Activated CD4-positive, alpha-beta memory T cell treated with anti-CD3 and anti-CD28 coated beads for 36 hours (primary cell): ENCODE measurements at regions of chr1 and their contacts with region 1.

Region 1: GRCh38 chr1:183655562-183656075 is 2.5 kb upstream of the APOBEC4 start:
- DNase-seq: peak; percentile 81
- H3K4me3 Mint-ChIP-seq: no peak overlapping the region
- H3K27ac Mint-ChIP-seq: no peak overlapping the region
- H3K4me1 Mint-ChIP-seq: peaks cover 33% of the 10 kb centered on the region
- H3K27me3 Mint-ChIP-seq: no peaks in the 10 kb centered on the region

Region 2: GRCh38 chr1:183635606-183636333 is 19.8 kb before region 1 on chr1 and contains the start of gene ARPC5:
- CTCF ChIA-PET with region 1: interaction called, 57 read pairs
- POLR2A ChIA-PET with region 1: interaction called, 3 read pairs
- intact Hi-C with region 1: loop called (anchors 1 kb)
- DNase-seq: peak; percentile 98
- H3K4me3 Mint-ChIP-seq: peak within 1 kb of the TSS; percentile 95
- H3K27ac Mint-ChIP-seq: peak within 1 kb of the TSS; percentile 99
- H3K4me1 Mint-ChIP-seq: peaks cover 33% of the 10 kb centered on the region
- H3K27me3 Mint-ChIP-seq: no peaks in the 10 kb centered on the region
- total RNA-seq, gene ARPC5: 158 to 161 TPM

Region 3: DNA sequence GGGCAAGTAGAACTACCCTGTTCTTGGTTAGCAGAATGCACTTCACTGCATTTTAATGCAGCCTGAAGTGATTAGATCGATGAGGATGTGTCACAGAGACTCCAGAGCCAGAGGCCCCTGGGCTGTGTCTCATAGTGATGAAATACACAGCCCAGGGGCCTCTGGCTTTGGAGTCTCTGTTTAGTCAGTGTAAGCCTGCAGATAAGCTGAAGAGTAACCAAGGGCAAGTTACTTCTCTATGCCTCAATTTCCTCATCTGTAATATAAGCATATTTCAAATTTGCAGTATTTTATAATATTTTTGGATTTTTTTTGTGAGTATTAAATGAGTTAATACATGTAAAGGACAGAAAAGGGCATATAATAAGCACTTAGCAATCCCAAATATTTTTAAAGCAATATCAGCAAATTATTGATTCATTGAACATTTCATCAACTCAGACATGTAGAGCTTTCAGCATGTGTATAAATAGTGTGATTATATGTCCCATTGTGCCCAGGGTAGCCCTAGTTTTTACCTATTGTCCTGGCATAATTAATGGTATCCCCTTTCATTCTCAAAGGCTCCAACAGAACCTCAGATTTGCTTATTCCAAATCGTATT is 21.1 kb after region 1 on chr1:
- CTCF ChIA-PET with region 1: interaction called, 16 read pairs
- POLR2A ChIA-PET with region 1: no interaction called
- intact Hi-C with region 1: no loop called
- DNase-seq: no peak
- H3K4me3 Mint-ChIP-seq: no peak overlapping the region
- H3K27ac Mint-ChIP-seq: no peak overlapping the region
- H3K4me1 Mint-ChIP-seq: no peaks in the 10 kb centered on the region
- H3K27me3 Mint-ChIP-seq: peaks cover 3% of the 10 kb centered on the region

Region 4: GRCh38 chr1:183757061-183757460 is 101.4 kb after region 1 on chr1:
- CTCF ChIA-PET with region 1: no interaction called
- POLR2A ChIA-PET with region 1: no interaction called
- intact Hi-C with region 1: no loop called
- DNase-seq: no peak
- H3K4me3 Mint-ChIP-seq: no peak overlapping the region
- H3K27ac Mint-ChIP-seq: no peak overlapping the region
- H3K4me1 Mint-ChIP-seq: no peaks in the 10 kb centered on the region
- H3K27me3 Mint-ChIP-seq: no peaks in the 10 kb centered on the region

Region 5: DNA sequence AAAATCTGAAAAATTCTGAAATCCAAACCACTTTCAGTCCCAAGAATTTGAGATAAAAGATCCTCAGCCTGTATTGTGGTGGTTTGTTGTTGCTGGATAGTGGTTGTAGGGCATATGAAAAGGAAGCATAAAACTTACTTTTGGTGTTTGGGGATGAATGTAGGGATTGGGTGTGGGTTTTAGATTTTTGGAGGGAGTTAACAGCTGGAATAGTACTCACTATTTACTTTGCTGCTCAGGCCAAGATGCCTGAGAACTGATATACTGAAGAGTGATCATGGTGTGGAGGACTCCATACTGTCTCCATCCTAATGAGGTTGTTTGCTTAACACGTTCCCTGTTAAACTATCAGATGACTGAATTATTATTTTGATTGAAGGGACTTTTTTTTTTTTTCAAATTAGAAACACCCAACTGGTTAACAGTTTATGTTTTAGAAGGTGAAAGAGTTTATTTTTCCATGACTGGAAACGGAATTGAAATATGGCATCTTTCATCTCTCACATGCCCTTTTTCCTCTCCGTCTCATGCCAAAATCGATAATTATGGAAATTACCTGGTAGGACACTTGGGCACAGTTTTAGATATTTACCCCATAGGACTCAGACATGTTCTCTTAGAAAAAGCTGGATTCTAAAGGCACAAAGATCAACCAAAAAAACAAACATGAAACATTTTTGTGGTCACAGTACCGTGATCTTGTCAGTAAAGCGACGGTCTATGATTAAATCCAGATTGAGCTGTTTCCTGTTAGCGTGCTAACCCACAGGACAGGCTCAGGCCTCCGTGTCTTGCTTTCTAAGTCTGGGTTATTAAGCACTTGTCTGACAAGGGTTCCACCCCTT is 186.6 kb after region 1 on chr1:
- CTCF ChIA-PET with region 1: no interaction called
- POLR2A ChIA-PET with region 1: no interaction called
- intact Hi-C with region 1: loop called (anchors 2 kb)
- DNase-seq: peak; percentile 51
- H3K4me3 Mint-ChIP-seq: peak overlapping the region; percentile 40
- H3K27ac Mint-ChIP-seq: peak overlapping the region; percentile 66
- H3K4me1 Mint-ChIP-seq: peaks cover 25% of the 10 kb centered on the region
- H3K27me3 Mint-ChIP-seq: no peaks in the 10 kb centered on the region

Region 6: GRCh38 chr1:184051485-184052193 is 396.0 kb after region 1 on chr1 and contains the start of gene TSEN15:
- CTCF ChIA-PET with region 1: interaction called, 9 read pairs
- POLR2A ChIA-PET with region 1: no interaction called
- intact Hi-C with region 1: loop called (anchors 5 kb)
- DNase-seq: peak; percentile 85
- H3K4me3 Mint-ChIP-seq: peak within 1 kb of the TSS; percentile 98
- H3K27ac Mint-ChIP-seq: peak within 1 kb of the TSS; percentile 96
- H3K4me1 Mint-ChIP-seq: peaks cover 33% of the 10 kb centered on the region
- H3K27me3 Mint-ChIP-seq: peaks cover 6% of the 10 kb centered on the region
- total RNA-seq, gene TSEN15: 44.1 to 44.3 TPM

Region 7: GRCh38 chr1:184242507-184242943 is 586.9 kb after region 1 on chr1:
- CTCF ChIA-PET with region 1: no interaction called
- POLR2A ChIA-PET with region 1: no interaction called
- intact Hi-C with region 1: no loop called
- DNase-seq: no peak
- H3K4me3 Mint-ChIP-seq: no peak overlapping the region
- H3K27ac Mint-ChIP-seq: no peak overlapping the region
- H3K4me1 Mint-ChIP-seq: no peaks in the 10 kb centered on the region
- H3K27me3 Mint-ChIP-seq: peaks cover 10% of the 10 kb centered on the region